Prostate gland (tissue), 2 donors: ENCODE measurements at regions of chr3 and their contacts with region 1.

Region 1: DNA sequence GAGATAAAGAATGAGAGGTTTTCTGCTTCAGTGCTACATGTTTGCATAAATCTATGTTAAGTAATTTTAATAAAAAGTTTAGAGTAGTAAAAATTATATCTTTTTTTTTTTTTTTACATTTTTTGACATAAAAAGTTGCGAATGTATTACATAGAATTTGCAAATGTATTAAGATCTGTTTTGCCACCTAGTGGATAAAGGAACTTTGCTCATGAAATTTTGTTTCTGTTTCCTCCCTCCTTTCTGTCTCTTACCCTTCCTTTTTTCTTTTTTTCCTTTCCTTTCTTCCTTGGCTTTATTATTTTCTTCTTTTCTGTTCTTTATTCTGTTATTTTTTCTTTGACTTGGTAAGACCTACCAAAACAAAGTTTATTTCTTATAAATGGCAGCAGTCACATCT is 58.5 kb upstream of the UTS2B start:
- DNase-seq: no peak
- H3K4me3 ChIP-seq: no peak overlapping the region
- H3K27ac ChIP-seq: no peak overlapping the region
- H3K4me1 ChIP-seq: no peaks in the 10 kb centered on the region
- H3K27me3 ChIP-seq: no peaks in the 10 kb centered on the region
- CTCF ChIP-seq: peak in 2 of 4 experiments; percentile 9 to 12
- POLR2A ChIP-seq: no peak

Region 2: GRCh38 chr3:191246628-191247027 is 142.2 kb before region 1 on chr3:
- intact Hi-C with region 1: loop called (anchors 5 kb)
- DNase-seq: no peak
- H3K4me3 ChIP-seq: no peak overlapping the region
- H3K27ac ChIP-seq: no peak overlapping the region
- H3K4me1 ChIP-seq: no peaks in the 10 kb centered on the region
- H3K27me3 ChIP-seq: no peaks in the 10 kb centered on the region
- CTCF ChIP-seq: no peak
- POLR2A ChIP-seq: no peak

Region 3: DNA sequence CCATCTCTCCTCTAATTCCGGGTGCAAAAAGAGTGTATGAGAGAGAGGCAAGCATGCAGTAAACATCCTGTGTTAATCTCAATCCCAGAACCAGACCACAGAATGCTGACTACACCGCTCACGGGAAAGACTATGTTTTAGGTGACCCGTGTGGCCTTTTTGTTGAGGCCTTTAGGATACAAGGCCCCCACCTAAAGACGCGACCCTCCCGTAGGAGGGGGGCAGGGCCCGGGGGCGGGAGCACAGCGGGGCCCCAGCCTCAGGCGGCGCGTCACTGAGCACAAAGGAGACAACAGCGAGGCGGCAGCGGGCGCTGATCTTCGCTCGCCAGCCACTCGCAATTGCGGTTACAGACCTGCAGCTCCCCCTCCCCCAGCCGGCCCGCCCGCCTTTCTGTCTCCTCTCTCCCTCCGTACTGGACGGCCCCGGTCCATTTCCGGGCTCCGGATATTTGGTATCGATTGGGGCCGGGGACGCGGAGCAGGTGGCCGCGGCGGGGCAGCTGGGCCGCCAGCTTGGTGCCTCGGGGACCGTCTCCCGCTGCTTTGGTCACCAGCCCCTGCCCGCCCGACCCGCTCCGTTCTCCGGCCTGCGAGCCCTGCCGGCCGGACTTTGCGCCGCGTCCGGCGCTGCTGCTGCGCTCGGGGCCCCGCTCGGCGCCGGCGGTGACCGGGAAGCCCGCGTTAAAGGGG is 59.7 kb before region 1 on chr3 and contains the start of gene CCDC50:
- intact Hi-C with region 1: loop called (anchors 10 kb)
- DNase-seq: peak; percentile 82
- H3K4me3 ChIP-seq: peak within 1 kb of the TSS; percentile 86 to 96
- H3K27ac ChIP-seq: peak within 1 kb of the TSS; percentile 89 to 92
- H3K4me1 ChIP-seq: peaks cover 6% of the 10 kb centered on the region
- H3K27me3 ChIP-seq: no peaks in the 10 kb centered on the region
- CTCF ChIP-seq: no peak
- POLR2A ChIP-seq: no peak
- total RNA-seq, gene CCDC50: 56.0 to 84.7 TPM

Region 4: DNA sequence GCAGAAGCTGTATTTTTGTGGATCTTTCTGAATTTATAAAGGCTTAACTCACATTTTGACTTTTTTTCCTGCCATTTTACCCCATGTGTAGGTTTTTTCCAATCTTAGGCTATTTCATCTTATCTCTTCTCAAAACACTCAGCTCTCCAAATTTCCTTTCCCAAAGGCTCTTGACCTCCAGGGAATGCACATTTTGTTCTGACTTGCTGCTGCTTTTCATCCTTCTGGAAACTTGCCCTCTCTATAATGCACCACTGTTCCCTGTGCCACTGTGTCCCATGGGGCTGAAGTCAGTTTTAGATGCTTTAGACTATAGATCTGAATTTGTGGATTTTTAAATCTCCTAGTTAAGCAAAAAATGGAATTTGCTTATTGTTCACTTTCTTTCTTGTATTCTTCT is 81.3 kb after region 1 on chr3:
- intact Hi-C with region 1: no loop called
- DNase-seq: no peak
- H3K4me3 ChIP-seq: no peak overlapping the region
- H3K27ac ChIP-seq: no peak overlapping the region
- H3K4me1 ChIP-seq: no peaks in the 10 kb centered on the region
- H3K27me3 ChIP-seq: no peaks in the 10 kb centered on the region
- CTCF ChIP-seq: no peak
- POLR2A ChIP-seq: no peak

Region 5: DNA sequence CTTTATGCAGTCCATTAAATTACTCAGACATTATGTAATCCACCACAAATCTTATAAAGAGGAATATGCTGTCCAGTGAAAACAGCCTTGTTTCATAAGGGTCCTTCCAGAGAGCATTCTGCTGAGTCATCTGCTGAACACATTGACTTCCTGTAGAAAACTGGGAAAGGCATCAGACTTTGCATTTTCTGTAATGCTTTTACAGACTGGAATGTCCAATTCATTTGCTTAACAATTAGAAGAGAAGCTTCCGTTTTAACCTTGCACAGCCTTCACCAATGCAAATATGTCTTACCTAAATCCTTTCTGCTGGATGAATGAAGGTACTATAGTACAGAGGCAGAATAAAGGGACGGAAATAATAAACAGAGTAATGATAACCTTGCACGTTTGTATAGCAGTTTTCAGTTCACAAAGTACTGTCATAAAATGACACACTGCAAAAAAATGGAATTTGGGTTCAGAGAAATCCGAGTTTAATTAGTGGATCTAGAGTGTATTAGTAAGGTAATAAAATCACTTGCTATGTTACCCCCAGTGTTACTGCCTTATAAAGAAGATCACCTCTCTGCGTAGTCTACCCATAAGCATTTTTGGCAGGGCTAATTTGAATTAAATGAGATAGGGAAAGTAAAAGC is 373.6 kb after region 1 on chr3:
- intact Hi-C with region 1: no loop called
- DNase-seq: no peak
- H3K4me3 ChIP-seq: no peak overlapping the region
- H3K27ac ChIP-seq: no peak overlapping the region
- H3K4me1 ChIP-seq: no peaks in the 10 kb centered on the region
- H3K27me3 ChIP-seq: no peaks in the 10 kb centered on the region
- CTCF ChIP-seq: no peak
- POLR2A ChIP-seq: no peak